Endothelial cell of umbilical vein (primary cell): ENCODE measurements at regions of chr17 and their contacts with region 1.

Region 1: GRCh38 chr17:35981908-35982330 is 622 bp upstream of the CCL16 start:
- DNase-seq: no peak
- H3K4me3 ChIP-seq: no peak overlapping the region
- H3K27ac ChIP-seq: no peak overlapping the region
- H3K4me1 ChIP-seq: peaks cover 24% of the 10 kb centered on the region
- H3K27me3 ChIP-seq: no peaks in the 10 kb centered on the region
- CTCF ChIP-seq: peak in 1 of 2 donors; percentile 11
- POLR2A ChIP-seq: no peak

Region 2: GRCh38 chr17:36008998-36009665 is 27.2 kb after region 1 on chr17:
- CTCF ChIA-PET with region 1: interaction called, 13 read pairs
- POLR2A ChIA-PET with region 1: no interaction called
- dilution Hi-C with region 1: no loop called
- intact Hi-C with region 1: no loop called
- DNase-seq: peak; percentile 36
- H3K4me3 ChIP-seq: no peak overlapping the region
- H3K27ac ChIP-seq: no peak overlapping the region
- H3K4me1 ChIP-seq: no peaks in the 10 kb centered on the region
- H3K27me3 ChIP-seq: no peaks in the 10 kb centered on the region
- CTCF ChIP-seq: peak; percentile 49 to 82
- POLR2A ChIP-seq: no peak

Region 3: GRCh38 chr17:36034127-36034526 is 52.2 kb after region 1 on chr17:
- CTCF ChIA-PET with region 1: no interaction called
- POLR2A ChIA-PET with region 1: no interaction called
- dilution Hi-C with region 1: no loop called
- intact Hi-C with region 1: no loop called
- DNase-seq: peak; percentile 11
- H3K4me3 ChIP-seq: no peak overlapping the region
- H3K27ac ChIP-seq: no peak overlapping the region
- H3K4me1 ChIP-seq: no peaks in the 10 kb centered on the region
- H3K27me3 ChIP-seq: peaks cover 6% of the 10 kb centered on the region in 2 experiments
- CTCF ChIP-seq: no peak
- POLR2A ChIP-seq: no peak

Region 4: DNA sequence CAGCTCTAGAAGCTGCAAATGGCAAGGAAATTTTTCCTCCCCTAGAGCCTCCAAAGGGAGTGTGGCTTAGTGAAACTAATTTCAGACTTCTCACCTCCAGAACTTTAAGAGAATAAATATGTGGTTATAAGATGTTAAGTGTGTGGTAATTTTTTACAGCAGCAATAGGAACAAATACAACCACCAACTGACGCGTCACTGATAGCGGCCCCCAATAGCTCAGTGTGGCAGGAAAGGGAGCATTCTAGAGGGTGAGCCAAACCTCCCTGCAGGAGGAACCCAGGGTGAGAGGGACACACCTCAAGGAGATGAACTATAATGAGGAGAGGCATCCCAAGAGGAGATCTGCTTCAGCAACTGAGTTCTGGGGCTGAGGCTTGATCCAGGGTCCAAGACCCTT is 125.7 kb after region 1 on chr17:
- CTCF ChIA-PET with region 1: no interaction called
- POLR2A ChIA-PET with region 1: no interaction called
- dilution Hi-C with region 1: no loop called
- intact Hi-C with region 1: no loop called
- DNase-seq: no peak
- H3K4me3 ChIP-seq: no peak overlapping the region
- H3K27ac ChIP-seq: no peak overlapping the region
- H3K4me1 ChIP-seq: no peaks in the 10 kb centered on the region
- H3K27me3 ChIP-seq: no peaks in the 10 kb centered on the region
- CTCF ChIP-seq: no peak
- POLR2A ChIP-seq: no peak